CD4-positive, alpha-beta memory T cell (primary cell): ENCODE measurements at regions of chr21 and their contacts with region 1.

Region 1: DNA sequence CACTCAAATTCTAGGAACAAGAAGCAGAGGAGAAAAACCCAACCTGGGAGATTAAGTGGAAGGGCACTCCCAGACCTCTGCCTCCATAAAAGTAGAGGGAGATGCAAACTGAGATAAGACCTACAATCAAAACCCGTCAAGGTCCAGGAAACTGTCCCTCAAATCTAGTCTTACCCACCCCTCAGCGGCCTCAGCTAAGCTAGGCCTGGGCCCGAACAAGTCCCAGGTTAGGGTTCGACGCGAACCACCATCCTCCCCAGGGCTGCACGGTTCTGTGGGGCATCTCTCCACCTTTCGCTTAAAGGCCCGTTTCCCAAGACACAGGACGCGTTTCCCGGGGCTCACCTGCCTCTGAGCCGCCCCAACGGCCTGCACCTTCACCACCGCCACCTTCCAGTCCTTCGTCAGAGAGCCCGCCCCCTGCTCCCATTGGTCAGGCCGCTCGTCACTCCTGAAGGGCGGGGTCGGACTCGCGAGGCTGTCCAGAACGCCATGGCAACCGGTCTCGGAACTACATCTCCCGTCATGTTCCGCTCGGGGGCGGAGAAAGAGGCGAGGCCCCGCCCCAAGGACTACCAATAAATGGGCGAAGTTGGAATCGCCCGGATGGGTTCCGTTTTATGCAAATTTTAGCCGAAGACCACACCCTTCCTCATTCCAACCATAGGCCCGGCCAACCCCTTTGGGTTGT is at the start of gene CRYZL1:
- DNase-seq: peak; percentile 100
- H3K4me3 ChIP-seq: peak within 1 kb of the TSS; percentile 87 to 94
- H3K4me3 Mint-ChIP-seq: peak within 1 kb of the TSS; percentile 93 to 99 (median 98)
- H3K27ac ChIP-seq: peak within 1 kb of the TSS; percentile 67
- H3K27ac Mint-ChIP-seq: peak within 1 kb of the TSS; percentile 88 to 100 (median 97)
- H3K4me1 ChIP-seq: peaks cover 28% of the 10 kb centered on the region
- H3K4me1 Mint-ChIP-seq: peaks cover 17 to 50% (median 28%) of the 10 kb centered on the region in 4 donors
- H3K27me3 ChIP-seq: peaks cover 7% of the 10 kb centered on the region
- H3K27me3 Mint-ChIP-seq: peaks cover 5 to 15% of the 10 kb centered on the region in 2 donors
- total RNA-seq, gene CRYZL1: 63.9 to 64.2 TPM

Region 2: GRCh38 chr21:32392880-32393676 is 1248.4 kb before region 1 on chr21 and contains the start of gene URB1:
- CTCF ChIA-PET with region 1: no interaction called
- POLR2A ChIA-PET with region 1: no interaction called
- intact Hi-C with region 1: loop called (anchors 5 kb)
- DNase-seq: peak; percentile 90 to 95 (median 92)
- H3K4me3 ChIP-seq: peak within 1 kb of the TSS; percentile 86 to 90
- H3K4me3 Mint-ChIP-seq: peak within 1 kb of the TSS; percentile 84 to 89 (median 88)
- H3K27ac ChIP-seq: peak within 1 kb of the TSS; percentile 68
- H3K27ac Mint-ChIP-seq: peak within 1 kb of the TSS; percentile 72 to 91 (median 84)
- H3K4me1 ChIP-seq: peaks cover 30% of the 10 kb centered on the region
- H3K4me1 Mint-ChIP-seq: peaks cover 23 to 54% (median 43%) of the 10 kb centered on the region in 4 donors
- H3K27me3 ChIP-seq: no peaks in the 10 kb centered on the region
- H3K27me3 Mint-ChIP-seq: peaks cover 2 to 4% of the 10 kb centered on the region in 2 donors
- total RNA-seq, gene URB1: 13.9 to 15.2 TPM

Region 3: GRCh38 chr21:32727687-32728455 is 913.6 kb before region 1 on chr21 and contains the start of gene SYNJ1:
- CTCF ChIA-PET with region 1: no interaction called
- POLR2A ChIA-PET with region 1: no interaction called
- intact Hi-C with region 1: loop called (anchors 5 kb)
- DNase-seq: peak; percentile 94 to 95 (median 94)
- H3K4me3 ChIP-seq: peak within 1 kb of the TSS; percentile 62 to 92
- H3K4me3 Mint-ChIP-seq: peak within 1 kb of the TSS; percentile 97 to 100 (median 98)
- H3K27ac ChIP-seq: peak within 1 kb of the TSS; percentile 75
- H3K27ac Mint-ChIP-seq: peak within 1 kb of the TSS; percentile 90 to 98 (median 98)
- H3K4me1 ChIP-seq: peaks cover 58% of the 10 kb centered on the region
- H3K4me1 Mint-ChIP-seq: peaks cover 38 to 76% (median 52%) of the 10 kb centered on the region in 4 donors
- H3K27me3 ChIP-seq: no peaks in the 10 kb centered on the region
- H3K27me3 Mint-ChIP-seq: no peaks in the 10 kb centered on the region
- total RNA-seq, gene SYNJ1: 27.6 to 29.4 TPM

Region 4: GRCh38 chr21:33491373-33492102 is 149.9 kb before region 1 on chr21 and contains the start of gene DNAJC28:
- CTCF ChIA-PET with region 1: no interaction called
- POLR2A ChIA-PET with region 1: no interaction called
- intact Hi-C with region 1: loop called (anchors 1 kb)
- DNase-seq: peak; percentile 92 to 97 (median 94)
- H3K4me3 ChIP-seq: peak within 1 kb of the TSS; percentile 76 to 88
- H3K4me3 Mint-ChIP-seq: peak within 1 kb of the TSS; percentile 83 to 99 (median 94)
- H3K27ac ChIP-seq: peak within 1 kb of the TSS; percentile 64
- H3K27ac Mint-ChIP-seq: peak within 1 kb of the TSS; percentile 74 to 98 (median 95)
- H3K4me1 ChIP-seq: peaks cover 4% of the 10 kb centered on the region
- H3K4me1 Mint-ChIP-seq: peaks cover 7 to 14% (median 11%) of the 10 kb centered on the region in 4 donors
- H3K27me3 ChIP-seq: no peaks in the 10 kb centered on the region
- H3K27me3 Mint-ChIP-seq: peaks cover 0 to 4% of the 10 kb centered on the region in 2 donors
- total RNA-seq, gene DNAJC28: 1.3 to 1.6 TPM

Region 5: GRCh38 chr21:33566514-33566913 is 75.0 kb before region 1 on chr21:
- CTCF ChIA-PET with region 1: no interaction called
- POLR2A ChIA-PET with region 1: no interaction called
- intact Hi-C with region 1: no loop called
- DNase-seq: no peak
- H3K4me3 ChIP-seq: no peak overlapping the region
- H3K4me3 Mint-ChIP-seq: no peak overlapping the region
- H3K27ac ChIP-seq: no peak overlapping the region
- H3K27ac Mint-ChIP-seq: peak overlapping the region in 1 of 7 donors; percentile 27
- H3K4me1 ChIP-seq: peaks cover 36% of the 10 kb centered on the region
- H3K4me1 Mint-ChIP-seq: peaks cover 21 to 55% (median 31%) of the 10 kb centered on the region in 4 donors
- H3K27me3 ChIP-seq: no peaks in the 10 kb centered on the region
- H3K27me3 Mint-ChIP-seq: no peaks in the 10 kb centered on the region

Region 6: GRCh38 chr21:33721081-33721480 is 79.6 kb after region 1 on chr21:
- CTCF ChIA-PET with region 1: no interaction called
- POLR2A ChIA-PET with region 1: no interaction called
- intact Hi-C with region 1: no loop called
- DNase-seq: no peak
- H3K4me3 ChIP-seq: no peak overlapping the region
- H3K4me3 Mint-ChIP-seq: no peak overlapping the region
- H3K27ac ChIP-seq: no peak overlapping the region
- H3K27ac Mint-ChIP-seq: no peak overlapping the region
- H3K4me1 ChIP-seq: no peaks in the 10 kb centered on the region
- H3K4me1 Mint-ChIP-seq: no peaks in the 10 kb centered on the region
- H3K27me3 ChIP-seq: no peaks in the 10 kb centered on the region
- H3K27me3 Mint-ChIP-seq: peaks cover 0 to 2% of the 10 kb centered on the region in 2 donors

Region 7: DNA sequence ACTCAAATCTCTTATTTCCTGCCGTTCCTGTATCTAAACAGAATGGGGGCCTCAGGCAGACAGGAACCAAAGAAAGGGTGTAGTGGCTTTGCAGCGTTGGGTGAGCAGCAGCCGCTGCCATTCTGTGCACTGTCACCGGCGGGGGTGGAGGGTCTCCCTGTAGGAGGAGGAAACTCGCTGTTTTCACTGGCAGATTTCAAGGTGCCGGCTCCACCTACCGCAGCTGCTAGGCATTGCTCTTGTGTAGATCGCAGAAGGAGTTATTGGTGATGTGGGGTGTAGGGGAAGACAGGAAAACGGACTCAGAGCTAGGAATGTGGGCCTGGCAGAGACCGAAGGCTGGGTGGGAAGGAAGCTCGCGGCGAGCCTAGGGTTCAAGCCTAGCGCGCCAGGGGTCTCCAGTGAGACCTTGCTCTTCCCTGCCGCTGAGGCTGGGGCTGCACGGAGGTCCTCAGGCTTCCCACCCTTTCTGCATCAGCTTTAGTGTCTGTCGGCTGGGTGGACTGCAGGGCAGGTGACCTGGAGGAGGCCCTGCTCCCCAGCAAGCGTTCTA is 253.3 kb after region 1 on chr21:
- CTCF ChIA-PET with region 1: no interaction called
- POLR2A ChIA-PET with region 1: no interaction called
- intact Hi-C with region 1: loop called (anchors 2 kb)
- DNase-seq: peak; percentile 29 to 46 (median 32)
- H3K4me3 ChIP-seq: no peak overlapping the region
- H3K4me3 Mint-ChIP-seq: peak overlapping the region; percentile 27 to 80 (median 53)
- H3K27ac ChIP-seq: no peak overlapping the region
- H3K27ac Mint-ChIP-seq: peak overlapping the region in 4 of 7 donors; percentile 19 to 80 (median 60)
- H3K4me1 ChIP-seq: peaks cover 8% of the 10 kb centered on the region
- H3K4me1 Mint-ChIP-seq: peaks cover 8 to 12% (median 11%) of the 10 kb centered on the region in 4 donors
- H3K27me3 ChIP-seq: no peaks in the 10 kb centered on the region
- H3K27me3 Mint-ChIP-seq: peaks cover 3 to 7% of the 10 kb centered on the region in 2 donors

Region 8: GRCh38 chr21:34073032-34073869 is 431.8 kb after region 1 on chr21 and contains the starts of genes MRPS6 and SLC5A3:
- CTCF ChIA-PET with region 1: no interaction called
- POLR2A ChIA-PET with region 1: no interaction called
- intact Hi-C with region 1: loop called (anchors 2 kb)
- DNase-seq: peak; percentile 68 to 78 (median 69)
- H3K4me3 ChIP-seq: peak within 1 kb of the TSS; percentile 37 to 66
- H3K4me3 Mint-ChIP-seq: peak within 1 kb of the TSS; percentile 89 to 97 (median 94)
- H3K27ac ChIP-seq: peak within 1 kb of the TSS; percentile 68
- H3K27ac Mint-ChIP-seq: peak within 1 kb of the TSS; percentile 91 to 97 (median 93)
- H3K4me1 ChIP-seq: peaks cover 39% of the 10 kb centered on the region
- H3K4me1 Mint-ChIP-seq: peaks cover 36 to 54% (median 45%) of the 10 kb centered on the region in 4 donors
- H3K27me3 ChIP-seq: no peaks in the 10 kb centered on the region
- H3K27me3 Mint-ChIP-seq: no peaks in the 10 kb centered on the region
- total RNA-seq, gene MRPS6: 76.9 to 80.1 TPM
- total RNA-seq, gene SLC5A3: 32.8 to 33.4 TPM